Right cardiac atrium (tissue), 5 donors: ENCODE measurements at regions of chr7 and their contacts with region 1.

Region 1: GRCh38 chr7:15323550-15323949 is 238.3 kb downstream of the AGMO start:
- DNase-seq: no peak
- ATAC-seq: peak in 1 of 2 donors; percentile 80
- H3K4me3 ChIP-seq: no peak overlapping the region
- H3K27ac ChIP-seq: no peak overlapping the region
- H3K4me1 ChIP-seq: no peaks in the 10 kb centered on the region
- H3K27me3 ChIP-seq: no peaks in the 10 kb centered on the region

Region 2: GRCh38 chr7:14598978-14599377 is 724.6 kb before region 1 on chr7:
- intact Hi-C with region 1: no loop called
- DNase-seq: no peak
- ATAC-seq: peak in 1 of 2 donors; percentile 33
- H3K4me3 ChIP-seq: no peak overlapping the region
- H3K27ac ChIP-seq: no peak overlapping the region
- H3K4me1 ChIP-seq: no peaks in the 10 kb centered on the region
- H3K27me3 ChIP-seq: no peaks in the 10 kb centered on the region

Region 3: DNA sequence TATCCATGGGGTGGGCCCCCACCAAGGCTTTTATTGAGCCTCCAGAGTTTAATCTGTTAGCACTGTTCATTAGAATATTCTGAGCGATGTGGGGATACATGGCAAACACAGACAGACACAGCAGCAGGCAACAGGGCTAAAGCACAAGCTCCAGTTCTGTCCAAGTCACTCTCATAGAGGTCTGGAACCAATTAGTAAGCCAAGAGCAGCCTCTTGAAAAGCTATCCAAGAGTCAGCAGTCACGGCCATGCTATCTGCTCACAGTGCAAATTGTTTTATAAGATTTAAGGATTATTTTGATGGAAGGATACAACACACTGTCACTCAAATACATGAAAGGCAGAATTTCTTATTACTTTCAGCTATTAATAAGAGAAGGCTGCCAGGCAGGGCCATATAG is 334.6 kb before region 1 on chr7:
- intact Hi-C with region 1: no loop called
- DNase-seq: no peak
- ATAC-seq: no peak
- H3K4me3 ChIP-seq: no peak overlapping the region
- H3K27ac ChIP-seq: no peak overlapping the region
- H3K4me1 ChIP-seq: no peaks in the 10 kb centered on the region
- H3K27me3 ChIP-seq: no peaks in the 10 kb centered on the region

Region 4: GRCh38 chr7:16071246-16071857 is 747.8 kb after region 1 on chr7:
- intact Hi-C with region 1: loop called in 2 of 4 experiments (anchors 5 to 10 kb)
- DNase-seq: peak in 1 of 3 donors; percentile 48
- ATAC-seq: peak in 1 of 2 donors; percentile 58
- H3K4me3 ChIP-seq: no peak overlapping the region
- H3K27ac ChIP-seq: no peak overlapping the region
- H3K4me1 ChIP-seq: no peaks in the 10 kb centered on the region
- H3K27me3 ChIP-seq: no peaks in the 10 kb centered on the region